Heart right ventricle (tissue), 16 donors: ENCODE measurements at regions of chr12 and their contacts with region 1.

Region 1: GRCh38 chr12:106760184-106760531 is 14.3 kb upstream of the RIC8B start:
- DNase-seq: no peak
- ATAC-seq: peak in 7 of 8 donors; percentile 33 to 48 (median 37)
- H3K4me3 ChIP-seq: no peak overlapping the region
- H3K27ac ChIP-seq: peak overlapping the region in 4 of 10 donors; percentile 9 to 54 (median 34)
- H3K4me1 ChIP-seq: peaks cover 0 to 45% (median 14%) of the 10 kb centered on the region in 9 donors
- H3K27me3 ChIP-seq: no peaks in the 10 kb centered on the region
- CTCF ChIP-seq: no peak

Region 2: GRCh38 chr12:106903241-106903945 is 143.2 kb after region 1 on chr12:
- intact Hi-C with region 1: no loop called
- DNase-seq: peak; percentile 69 to 72
- ATAC-seq: peak; percentile 86 to 96 (median 92)
- H3K4me3 ChIP-seq: peak overlapping the region in 9 of 10 donors; percentile 4 to 65 (median 51)
- H3K27ac ChIP-seq: no peak overlapping the region
- H3K4me1 ChIP-seq: peaks cover 0 to 13% (median 9%) of the 10 kb centered on the region in 9 donors
- H3K27me3 ChIP-seq: peaks cover 0 to 100% (median 5%) of the 10 kb centered on the region in 7 donors
- CTCF ChIP-seq: no peak

Region 3: GRCh38 chr12:106919910-106920544 is 159.9 kb after region 1 on chr12:
- intact Hi-C with region 1: loop called in 1 of 10 experiments (anchors 10 kb)
- DNase-seq: peak in 1 of 2 donors; percentile 14
- ATAC-seq: peak in 2 of 8 donors; percentile 27 to 55
- H3K4me3 ChIP-seq: no peak overlapping the region
- H3K27ac ChIP-seq: no peak overlapping the region
- H3K4me1 ChIP-seq: peaks cover 0 to 5% (median 0%) of the 10 kb centered on the region in 9 donors
- H3K27me3 ChIP-seq: peaks cover 0 to 94% (median 0%) of the 10 kb centered on the region in 7 donors
- CTCF ChIP-seq: peak; percentile 61 to 93 (median 84)

Region 4: GRCh38 chr12:107767466-107767865 is 1007.3 kb after region 1 on chr12:
- intact Hi-C with region 1: no loop called
- DNase-seq: no peak
- ATAC-seq: no peak
- H3K4me3 ChIP-seq: no peak overlapping the region
- H3K27ac ChIP-seq: no peak overlapping the region
- H3K4me1 ChIP-seq: no peaks in the 10 kb centered on the region
- H3K27me3 ChIP-seq: peaks cover 0 to 27% (median 14%) of the 10 kb centered on the region in 7 donors
- CTCF ChIP-seq: no peak